ENCODE measurements at regions of chr13 and their contacts with region 1.

Region 1: DNA sequence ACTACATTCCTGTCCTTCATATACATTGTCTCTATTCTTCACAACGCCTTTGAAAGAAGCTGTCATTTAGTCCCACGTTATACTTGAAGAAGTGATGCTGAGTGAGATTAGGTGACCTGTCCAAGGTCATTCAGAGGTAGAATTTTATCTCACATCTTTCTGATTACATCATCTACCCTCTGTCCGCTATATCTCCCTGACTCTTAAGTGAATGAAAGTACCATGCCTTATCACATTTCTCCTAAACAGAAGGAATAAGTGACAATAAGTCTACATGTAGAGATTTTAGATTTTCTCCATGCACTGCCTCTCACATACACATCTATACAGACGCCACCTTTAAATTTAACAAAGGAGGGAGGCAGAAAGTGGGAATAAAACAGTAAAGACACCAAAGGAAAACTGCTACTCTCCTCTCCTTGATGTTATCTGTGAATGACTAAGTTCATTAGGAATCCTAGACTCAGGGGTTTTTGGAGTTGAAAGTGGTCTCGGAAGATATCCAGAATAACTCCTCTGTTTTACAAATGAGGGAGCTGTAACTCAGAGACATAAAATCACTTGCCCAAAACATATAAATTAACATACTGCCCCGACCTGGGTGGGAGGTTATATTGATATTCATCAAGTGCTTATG is 4.9 kb upstream of the CLDN10 start:
- DNase-seq: no peak
- H3K4me3 ChIP-seq: no peak overlapping the region
- H3K27me3 ChIP-seq: peaks cover 14% of the 10 kb centered on the region
- CTCF ChIP-seq: no peak

Region 2: GRCh38 chr13:95536632-95537241 is 10.9 kb before region 1 on chr13:
- CTCF ChIA-PET with region 1: interaction called, 12 read pairs
- POLR2A ChIA-PET with region 1: no interaction called
- DNase-seq: no peak
- H3K4me3 ChIP-seq: no peak overlapping the region
- H3K27me3 ChIP-seq: peaks cover 3% of the 10 kb centered on the region; the same call in 1 of the 2 replicates
- CTCF ChIP-seq: peak; percentile 49

Region 3: GRCh38 chr13:95564733-95565291 is 17.2 kb after region 1 on chr13:
- CTCF ChIA-PET with region 1: no interaction called
- POLR2A ChIA-PET with region 1: no interaction called
- DNase-seq: peak; percentile 10
- H3K4me3 ChIP-seq: no peak overlapping the region
- H3K27me3 ChIP-seq: peaks cover 1% of the 10 kb centered on the region; the same call in 1 of the 2 replicates
- CTCF ChIP-seq: no peak

Region 4: GRCh38 chr13:95723438-95723837 is 175.8 kb after region 1 on chr13:
- CTCF ChIA-PET with region 1: no interaction called
- POLR2A ChIA-PET with region 1: no interaction called
- DNase-seq: no peak
- H3K4me3 ChIP-seq: no peak overlapping the region
- H3K27me3 ChIP-seq: no peaks in the 10 kb centered on the region
- CTCF ChIP-seq: no peak

Measured in BJ (cell line).